ENCODE measurements at regions of chr12 and their contacts with region 1.

Region 1: GRCh38 chr12:98572010-98572409 is 21.5 kb upstream of the SLC25A3 start:
- DNase-seq: no peak
- H3K4me3 Mint-ChIP-seq: no peak overlapping the region
- H3K27ac Mint-ChIP-seq: no peak overlapping the region
- H3K4me1 Mint-ChIP-seq: peaks cover under 1% of the 10 kb centered on the region
- H3K27me3 Mint-ChIP-seq: no peaks in the 10 kb centered on the region

Region 2: DNA sequence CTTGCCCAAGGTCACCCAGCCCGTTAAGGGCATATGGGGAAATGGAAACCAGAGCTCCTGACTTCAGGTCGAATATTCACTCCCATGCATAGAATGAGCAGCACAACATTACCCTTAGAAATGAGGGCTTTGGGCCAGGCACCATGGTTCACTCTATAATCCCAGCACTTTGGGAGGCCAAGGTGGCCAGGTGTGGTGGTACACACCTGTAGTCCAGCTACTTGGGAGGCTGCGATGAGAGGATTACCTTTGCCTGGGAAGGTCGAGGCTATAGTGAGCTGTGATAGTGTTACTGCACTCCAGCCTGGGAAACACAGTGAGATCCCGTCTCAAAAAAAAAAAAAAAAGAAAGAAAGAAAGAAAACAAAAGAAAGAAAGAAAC is 397.6 kb before region 1 on chr12:
- CTCF ChIA-PET with region 1: no interaction called
- POLR2A ChIA-PET with region 1: no interaction called
- intact Hi-C with region 1: no loop called
- DNase-seq: no peak
- H3K4me3 Mint-ChIP-seq: no peak overlapping the region
- H3K27ac Mint-ChIP-seq: no peak overlapping the region
- H3K4me1 Mint-ChIP-seq: no peaks in the 10 kb centered on the region
- H3K27me3 Mint-ChIP-seq: no peaks in the 10 kb centered on the region

Region 3: DNA sequence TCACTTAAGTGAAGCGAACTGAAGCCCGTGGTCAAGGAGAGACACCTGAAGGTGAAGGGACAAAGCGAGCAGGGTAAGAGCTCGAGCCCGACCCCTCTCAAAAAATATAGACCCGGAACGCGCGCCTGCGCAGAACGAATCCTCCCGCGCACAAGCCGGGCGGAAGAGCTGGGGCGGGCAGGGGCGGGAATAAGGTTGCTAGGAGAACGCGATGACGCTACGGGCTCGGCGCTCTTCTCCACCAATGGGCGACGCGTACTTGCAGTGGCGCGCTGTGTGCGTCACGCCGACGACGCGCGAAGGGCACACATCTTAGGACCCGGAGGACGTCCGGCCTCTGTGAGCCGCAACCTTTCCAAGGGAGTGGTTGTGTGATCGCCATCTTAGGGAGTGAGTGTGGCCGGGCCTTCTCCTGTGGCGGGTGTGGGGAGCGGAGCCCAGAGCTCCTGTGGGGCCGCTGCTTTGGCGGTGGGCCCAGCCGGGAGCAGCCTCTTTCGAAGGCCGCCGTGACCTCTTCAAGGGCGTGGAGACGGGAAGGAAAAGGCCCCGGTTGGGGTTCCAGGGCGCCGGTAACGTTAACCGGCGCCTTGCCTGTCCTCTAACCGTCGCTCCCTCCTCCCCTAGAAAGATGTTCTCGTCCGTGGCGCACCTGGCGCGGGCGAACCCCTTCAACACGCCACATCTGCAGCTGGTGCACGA is 21.5 kb after region 1 on chr12 and contains the start of gene SLC25A3:
- CTCF ChIA-PET with region 1: interaction called, 42 read pairs
- POLR2A ChIA-PET with region 1: interaction called, 4 read pairs
- intact Hi-C with region 1: loop called (anchors 2 kb)
- DNase-seq: peak; percentile 96
- H3K4me3 Mint-ChIP-seq: peak within 1 kb of the TSS; percentile 91
- H3K27ac Mint-ChIP-seq: peak within 1 kb of the TSS; percentile 97
- H3K4me1 Mint-ChIP-seq: peaks cover 29% of the 10 kb centered on the region
- H3K27me3 Mint-ChIP-seq: no peaks in the 10 kb centered on the region
- total RNA-seq, gene SLC25A3: 584 to 620 TPM

Region 4: DNA sequence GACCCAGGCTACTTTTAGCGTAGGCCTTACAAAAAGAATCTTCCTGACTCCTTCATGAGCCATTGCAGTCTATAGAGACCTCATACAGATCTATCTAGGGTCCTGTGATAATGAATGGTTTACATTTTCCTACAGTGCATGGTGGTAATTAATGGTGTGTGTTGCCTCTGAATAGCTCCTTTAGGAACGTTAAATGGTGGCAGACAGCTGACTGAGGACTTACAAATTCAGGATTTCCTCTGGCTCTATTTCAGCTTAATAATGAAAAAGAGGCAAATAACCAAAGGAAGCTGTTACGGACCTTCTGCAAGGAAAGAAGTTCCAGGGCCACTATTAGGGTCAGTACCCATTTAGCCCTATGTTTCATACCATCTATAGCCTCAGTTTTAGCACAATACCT is 67.5 kb after region 1 on chr12:
- CTCF ChIA-PET with region 1: interaction called, 12 read pairs
- POLR2A ChIA-PET with region 1: no interaction called
- intact Hi-C with region 1: loop called (anchors 2 kb)
- DNase-seq: no peak
- H3K4me3 Mint-ChIP-seq: no peak overlapping the region
- H3K27ac Mint-ChIP-seq: no peak overlapping the region
- H3K4me1 Mint-ChIP-seq: peaks cover 21% of the 10 kb centered on the region
- H3K27me3 Mint-ChIP-seq: no peaks in the 10 kb centered on the region

Region 5: DNA sequence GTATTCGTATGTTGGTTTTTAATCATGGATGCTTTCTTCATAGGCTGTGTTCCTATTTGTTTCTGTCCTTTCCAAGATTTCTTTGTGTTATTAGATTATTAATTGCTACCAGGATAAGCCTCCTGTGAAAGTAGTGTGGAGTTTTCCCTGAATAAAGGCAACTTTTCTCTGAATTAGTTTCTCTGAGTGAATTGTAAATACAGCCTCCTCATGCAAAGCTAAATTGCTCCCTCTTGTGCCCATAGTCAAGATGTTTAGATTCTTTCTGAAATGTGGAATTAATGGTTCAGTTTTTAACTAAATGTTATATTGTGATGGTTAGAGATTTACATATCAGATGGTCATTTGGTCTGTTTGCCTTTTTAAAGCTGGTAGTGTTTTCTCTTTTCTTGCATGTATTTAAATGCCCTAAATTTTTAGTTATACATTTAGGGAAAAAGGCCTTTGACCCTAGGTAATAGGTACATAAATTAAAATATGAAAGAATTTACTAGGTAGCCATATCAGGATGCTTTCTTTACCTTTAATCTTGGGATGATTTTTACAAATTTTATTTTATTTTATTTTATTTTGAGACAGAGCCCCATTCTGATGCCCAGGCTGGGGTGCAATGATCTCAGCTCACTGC is 82.0 kb after region 1 on chr12:
- CTCF ChIA-PET with region 1: interaction called, 17 read pairs
- POLR2A ChIA-PET with region 1: no interaction called
- intact Hi-C with region 1: loop called (anchors 1 kb)
- DNase-seq: no peak
- H3K4me3 Mint-ChIP-seq: no peak overlapping the region
- H3K27ac Mint-ChIP-seq: no peak overlapping the region
- H3K4me1 Mint-ChIP-seq: peaks cover 14% of the 10 kb centered on the region
- H3K27me3 Mint-ChIP-seq: no peaks in the 10 kb centered on the region

Region 6: DNA sequence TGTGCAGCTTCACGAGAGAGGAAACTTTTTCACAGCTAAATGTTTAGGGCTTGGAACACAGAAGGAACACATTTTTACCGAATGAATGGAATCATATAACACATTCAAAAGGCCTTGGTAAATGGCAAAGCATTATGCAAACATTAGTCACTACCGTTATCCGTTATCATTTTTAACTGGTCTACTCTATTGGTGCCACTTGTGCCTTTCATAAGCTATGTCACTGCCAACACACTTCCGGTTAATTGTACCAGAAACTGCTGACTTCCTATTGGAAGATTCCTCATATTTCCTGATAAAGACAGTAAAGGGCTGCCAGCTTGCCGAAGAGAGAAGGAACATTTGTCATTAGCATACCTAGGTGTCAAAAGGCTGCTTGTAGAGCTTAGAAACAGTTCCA is 242.2 kb after region 1 on chr12:
- CTCF ChIA-PET with region 1: no interaction called
- POLR2A ChIA-PET with region 1: no interaction called
- intact Hi-C with region 1: no loop called
- DNase-seq: no peak
- H3K4me3 Mint-ChIP-seq: no peak overlapping the region
- H3K27ac Mint-ChIP-seq: no peak overlapping the region
- H3K4me1 Mint-ChIP-seq: no peaks in the 10 kb centered on the region
- H3K27me3 Mint-ChIP-seq: peaks cover 18% of the 10 kb centered on the region